ENCODE measurements at regions of chr10 and their contacts with region 1.

Region 1: GRCh38 chr10:15901889-15902288 is 41.6 kb upstream of the MINDY3 start:
- DNase-seq: no peak

Region 2: GRCh38 chr10:15842556-15843169 is 59.2 kb before region 1 on chr10:
- intact Hi-C with region 1: no loop called
- DNase-seq: no peak

Region 3: DNA sequence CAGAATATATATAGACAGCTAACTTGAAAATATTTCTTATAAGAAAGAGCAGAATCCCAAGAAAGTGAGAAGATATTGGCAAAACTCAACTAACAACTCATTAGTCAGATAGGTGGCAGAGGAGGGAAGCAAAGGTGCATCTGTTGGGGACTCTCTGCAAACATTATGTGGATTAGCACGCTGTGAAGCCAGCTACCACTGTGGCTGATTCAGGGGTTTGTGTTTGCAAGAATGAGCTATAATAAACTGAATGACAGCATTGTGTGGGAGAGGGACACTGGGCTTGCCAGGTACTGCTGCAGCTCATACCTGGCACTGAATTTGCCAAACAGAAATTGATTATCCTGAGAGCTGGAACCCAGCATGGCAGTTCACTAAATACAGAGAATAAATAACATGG is 128.7 kb after region 1 on chr10:
- intact Hi-C with region 1: no loop called
- DNase-seq: no peak

Region 4: DNA sequence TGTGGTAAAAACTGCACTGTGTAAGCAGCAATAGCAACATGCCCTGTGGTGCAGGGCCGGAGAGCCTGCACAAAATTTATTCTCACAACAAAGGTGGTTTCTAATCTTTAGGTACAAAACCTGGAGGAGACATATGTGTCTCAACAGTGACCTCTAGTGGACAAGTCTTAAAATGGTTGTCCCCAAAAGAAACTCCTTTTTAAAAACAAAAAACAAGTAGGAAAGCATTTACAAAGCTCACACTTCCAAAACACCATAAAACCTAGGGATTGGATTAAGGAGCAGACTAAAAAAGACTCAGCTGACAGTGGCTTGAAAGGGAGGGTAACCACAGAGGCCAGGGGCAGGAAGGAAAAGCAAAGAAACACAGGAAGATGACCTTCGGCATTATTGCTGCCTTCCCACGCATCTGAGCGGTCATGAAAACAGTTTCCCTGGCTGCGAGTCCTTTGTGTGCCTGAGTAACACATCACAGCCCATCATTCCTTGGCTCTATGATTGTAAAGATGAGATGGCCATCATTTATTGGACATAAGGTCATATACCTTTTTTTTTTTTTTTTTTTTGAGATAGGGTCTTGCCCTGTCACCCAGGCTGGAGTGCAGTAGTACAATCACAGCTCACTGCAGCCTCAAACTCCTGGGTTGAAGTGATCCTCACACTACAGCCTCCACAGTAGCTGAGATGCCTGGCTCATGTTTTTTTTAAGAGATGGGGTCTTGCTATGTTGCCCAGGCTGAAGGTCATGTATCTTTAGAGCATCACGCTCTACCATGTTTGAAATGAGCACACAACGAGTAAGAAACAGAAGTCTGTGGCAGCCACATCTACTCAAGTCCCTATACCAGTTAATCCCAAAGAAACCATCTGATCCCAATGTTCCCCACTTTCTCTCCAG is 875.8 kb after region 1 on chr10:
- intact Hi-C with region 1: loop called (anchors 2 kb)
- DNase-seq: no peak

Region 5: GRCh38 chr10:16809074-16809718 is 907.3 kb after region 1 on chr10:
- intact Hi-C with region 1: loop called (anchors 5 kb)
- DNase-seq: peak in 5 of 10 donors; percentile 45 to 89 (median 52)